CD8-positive, alpha-beta T cell (primary cell): ENCODE measurements at regions of chr9 and their contacts with region 1.

Region 1: DNA sequence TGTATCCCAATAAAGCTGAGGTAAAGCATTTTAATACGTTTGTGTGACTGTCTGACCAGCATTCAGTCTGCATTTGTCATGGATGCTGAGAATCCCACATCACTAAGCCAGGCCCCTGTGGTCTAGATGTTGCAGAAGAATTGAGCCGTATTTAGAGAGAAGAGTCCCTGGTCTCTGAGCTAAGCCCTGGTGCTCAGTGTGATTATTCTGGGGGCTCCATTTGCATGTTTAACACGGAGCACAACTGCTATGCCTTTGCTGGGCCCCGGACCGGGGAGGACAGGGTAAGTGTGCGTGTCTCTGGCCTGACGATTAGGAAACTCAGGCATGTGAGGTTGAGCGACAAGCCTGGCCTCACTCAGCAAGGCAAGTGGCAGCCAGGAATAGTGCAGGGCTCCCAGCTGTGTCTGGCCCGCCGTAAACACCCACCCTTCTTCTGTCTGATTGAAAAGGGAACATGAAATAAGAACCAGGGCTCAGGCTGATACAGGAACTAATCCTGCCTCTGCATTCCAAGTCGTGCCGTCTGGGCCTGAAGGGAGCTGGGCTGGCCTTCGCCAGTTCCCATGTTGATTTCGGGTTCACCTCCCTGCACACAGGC is 22.3 kb downstream of the FAM78A start:
- DNase-seq: peak in 2 of 9 experiments; percentile 19 to 28
- ATAC-seq: no peak
- H3K4me3 ChIP-seq: no peak overlapping the region
- H3K4me3 Mint-ChIP-seq: peak overlapping the region; percentile 29
- H3K27ac ChIP-seq: no peak overlapping the region
- H3K27ac Mint-ChIP-seq: peak overlapping the region; percentile 75
- H3K4me1 ChIP-seq: peaks cover 76% of the 10 kb centered on the region
- H3K4me1 Mint-ChIP-seq: peaks cover 62% of the 10 kb centered on the region
- H3K27me3 ChIP-seq: no peaks in the 10 kb centered on the region
- H3K27me3 Mint-ChIP-seq: no peaks in the 10 kb centered on the region
- CTCF ChIP-seq: no peak

Region 2: DNA sequence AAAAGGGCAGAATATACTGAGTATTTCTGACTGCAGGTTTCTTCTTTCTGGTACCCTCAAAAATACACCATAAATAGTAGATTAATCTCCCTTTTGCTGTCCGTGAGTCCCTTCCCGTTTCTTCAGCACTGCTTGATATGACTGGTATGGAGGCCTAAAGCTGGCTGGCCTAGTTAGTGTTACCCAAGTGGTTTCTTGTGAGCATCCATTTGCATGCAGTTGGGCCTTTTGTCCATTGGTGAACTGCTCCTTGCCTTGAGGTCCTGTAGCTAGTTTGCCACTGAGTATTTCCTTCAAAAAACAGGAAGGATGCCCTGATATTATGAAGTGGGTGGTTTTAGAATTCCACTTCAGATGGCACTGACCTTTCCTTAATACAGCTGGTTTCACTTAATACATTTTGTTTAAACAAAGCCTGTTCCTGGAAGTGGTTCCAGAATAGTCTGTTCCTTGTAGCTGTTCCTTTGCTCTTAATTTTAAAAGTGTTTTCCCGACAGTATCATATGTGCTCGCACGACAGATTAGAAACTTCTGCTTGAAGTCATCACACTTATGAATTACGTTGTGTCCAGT is 459.0 kb before region 1 on chr9:
- CTCF ChIA-PET with region 1: no interaction called
- POLR2A ChIA-PET with region 1: no interaction called
- intact Hi-C with region 1: no loop called
- DNase-seq: no peak
- ATAC-seq: no peak
- H3K4me3 ChIP-seq: no peak overlapping the region
- H3K4me3 Mint-ChIP-seq: no peak overlapping the region
- H3K27ac ChIP-seq: no peak overlapping the region
- H3K27ac Mint-ChIP-seq: no peak overlapping the region
- H3K4me1 ChIP-seq: no peaks in the 10 kb centered on the region
- H3K4me1 Mint-ChIP-seq: peaks cover 2% of the 10 kb centered on the region
- H3K27me3 ChIP-seq: no peaks in the 10 kb centered on the region
- H3K27me3 Mint-ChIP-seq: no peaks in the 10 kb centered on the region
- CTCF ChIP-seq: no peak

Region 3: GRCh38 chr9:131178382-131178781 is 75.6 kb before region 1 on chr9:
- CTCF ChIA-PET with region 1: interaction called, 11 read pairs
- POLR2A ChIA-PET with region 1: interaction called, 6 read pairs
- intact Hi-C with region 1: no loop called
- DNase-seq: peak; percentile 65 to 86 (median 77)
- ATAC-seq: peak; percentile 100
- H3K4me3 ChIP-seq: no peak overlapping the region
- H3K4me3 Mint-ChIP-seq: no peak overlapping the region
- H3K27ac ChIP-seq: no peak overlapping the region
- H3K27ac Mint-ChIP-seq: no peak overlapping the region
- H3K4me1 ChIP-seq: no peaks in the 10 kb centered on the region
- H3K4me1 Mint-ChIP-seq: peaks cover 12% of the 10 kb centered on the region
- H3K27me3 ChIP-seq: no peaks in the 10 kb centered on the region
- H3K27me3 Mint-ChIP-seq: no peaks in the 10 kb centered on the region
- CTCF ChIP-seq: peak; percentile 99

Region 4: GRCh38 chr9:131237931-131238401 is 16.0 kb before region 1 on chr9:
- CTCF ChIA-PET with region 1: interaction called, 3 read pairs
- POLR2A ChIA-PET with region 1: interaction called, 49 read pairs
- intact Hi-C with region 1: loop called (anchors 1 kb)
- DNase-seq: peak; percentile 71 to 94 (median 88)
- ATAC-seq: peak; percentile 92
- H3K4me3 ChIP-seq: peak overlapping the region; percentile 15 to 50
- H3K4me3 Mint-ChIP-seq: peak overlapping the region; percentile 83
- H3K27ac ChIP-seq: peak overlapping the region; percentile 54 to 73
- H3K27ac Mint-ChIP-seq: peak overlapping the region; percentile 98
- H3K4me1 ChIP-seq: peaks cover 41% of the 10 kb centered on the region
- H3K4me1 Mint-ChIP-seq: peaks cover 42% of the 10 kb centered on the region
- H3K27me3 ChIP-seq: no peaks in the 10 kb centered on the region
- H3K27me3 Mint-ChIP-seq: no peaks in the 10 kb centered on the region
- CTCF ChIP-seq: no peak

Region 5: GRCh38 chr9:131270171-131271015 is 16.4 kb after region 1 on chr9:
- CTCF ChIA-PET with region 1: interaction called, 40 read pairs
- POLR2A ChIA-PET with region 1: interaction called, 490 read pairs
- intact Hi-C with region 1: loop called (anchors 1 kb)
- DNase-seq: peak in 6 of 9 experiments; percentile 38 to 82 (median 62)
- ATAC-seq: peak; percentile 7
- H3K4me3 ChIP-seq: peak overlapping the region; percentile 90 to 95
- H3K4me3 Mint-ChIP-seq: peak overlapping the region; percentile 98
- H3K27ac ChIP-seq: peak overlapping the region; percentile 84 to 93
- H3K27ac Mint-ChIP-seq: peak overlapping the region; percentile 94
- H3K4me1 ChIP-seq: peaks cover 60% of the 10 kb centered on the region
- H3K4me1 Mint-ChIP-seq: peaks cover 70% of the 10 kb centered on the region
- H3K27me3 ChIP-seq: no peaks in the 10 kb centered on the region
- H3K27me3 Mint-ChIP-seq: no peaks in the 10 kb centered on the region
- CTCF ChIP-seq: no peak

Region 6: GRCh38 chr9:131277910-131278701 is 24.1 kb after region 1 on chr9:
- CTCF ChIA-PET with region 1: interaction called, 40 read pairs
- POLR2A ChIA-PET with region 1: interaction called, 490 read pairs
- intact Hi-C with region 1: loop called (anchors 1 kb)
- DNase-seq: peak; percentile 43 to 89 (median 72)
- ATAC-seq: peak; percentile 51
- H3K4me3 ChIP-seq: peak overlapping the region; percentile 45 to 49
- H3K4me3 Mint-ChIP-seq: peak overlapping the region; percentile 90
- H3K27ac ChIP-seq: peak overlapping the region; percentile 48 to 84
- H3K27ac Mint-ChIP-seq: peak overlapping the region; percentile 90
- H3K4me1 ChIP-seq: peaks cover 26% of the 10 kb centered on the region
- H3K4me1 Mint-ChIP-seq: peaks cover 30% of the 10 kb centered on the region
- H3K27me3 ChIP-seq: peaks cover 0 to 3% of the 10 kb centered on the region in 2 experiments
- H3K27me3 Mint-ChIP-seq: no peaks in the 10 kb centered on the region
- CTCF ChIP-seq: no peak

Region 7: DNA sequence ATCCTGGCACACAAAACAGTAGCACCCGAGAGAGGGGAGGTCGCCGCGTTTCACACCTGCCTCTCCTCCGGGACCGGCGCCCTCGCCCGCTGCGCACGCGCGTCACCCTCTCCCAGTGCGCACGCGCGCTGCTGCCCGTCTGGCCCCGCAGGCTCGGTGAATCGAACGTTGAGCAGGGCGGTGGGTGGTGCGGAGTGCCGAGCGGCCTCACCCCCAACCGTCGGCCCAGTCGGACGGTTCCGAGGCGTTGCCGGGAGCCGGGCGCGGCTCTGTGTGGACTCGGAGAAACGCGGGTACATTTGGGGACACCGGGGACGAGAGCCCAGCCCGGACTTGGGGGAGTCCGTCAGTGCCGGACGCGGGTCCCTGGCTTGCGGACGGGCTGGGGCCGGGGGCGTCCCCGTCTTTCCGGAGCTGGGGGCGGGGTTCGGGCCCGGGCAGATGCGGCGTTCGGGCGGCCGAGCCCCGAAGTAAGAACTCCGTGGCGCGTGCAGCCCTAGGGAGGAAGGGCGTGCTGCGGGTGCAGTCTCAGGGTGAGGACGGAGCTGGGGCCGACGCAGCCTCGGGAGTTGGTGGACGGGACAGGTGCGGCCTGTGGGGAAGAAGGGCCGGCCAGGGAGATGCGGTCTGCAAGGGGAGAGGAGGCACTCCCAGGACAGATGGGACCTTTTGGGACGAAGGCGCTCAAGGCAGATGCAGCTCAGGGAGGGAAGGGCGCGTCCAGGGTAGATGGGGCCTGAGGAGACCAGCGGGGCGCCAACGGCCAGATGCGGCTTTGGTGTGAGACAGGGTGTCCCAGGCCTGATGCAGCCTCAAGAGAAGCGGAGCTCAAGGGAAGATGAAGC is 249.0 kb after region 1 on chr9 and contains the start of gene POMT1:
- CTCF ChIA-PET with region 1: no interaction called
- POLR2A ChIA-PET with region 1: interaction called, 3 read pairs
- intact Hi-C with region 1: loop called in 1 of 2 experiments (anchors 5 kb)
- DNase-seq: peak; percentile 76 to 95 (median 87)
- ATAC-seq: peak; percentile 56
- H3K4me3 ChIP-seq: peak within 1 kb of the TSS; percentile 79 to 83
- H3K4me3 Mint-ChIP-seq: peak within 1 kb of the TSS; percentile 94
- H3K27ac ChIP-seq: peak within 1 kb of the TSS; percentile 45 to 50
- H3K27ac Mint-ChIP-seq: peak within 1 kb of the TSS; percentile 93
- H3K4me1 ChIP-seq: peaks cover 43% of the 10 kb centered on the region
- H3K4me1 Mint-ChIP-seq: peaks cover 62% of the 10 kb centered on the region
- H3K27me3 ChIP-seq: no peaks in the 10 kb centered on the region
- H3K27me3 Mint-ChIP-seq: no peaks in the 10 kb centered on the region
- CTCF ChIP-seq: no peak
- total RNA-seq, gene POMT1: 33.9 to 40.8 TPM

Region 8: DNA sequence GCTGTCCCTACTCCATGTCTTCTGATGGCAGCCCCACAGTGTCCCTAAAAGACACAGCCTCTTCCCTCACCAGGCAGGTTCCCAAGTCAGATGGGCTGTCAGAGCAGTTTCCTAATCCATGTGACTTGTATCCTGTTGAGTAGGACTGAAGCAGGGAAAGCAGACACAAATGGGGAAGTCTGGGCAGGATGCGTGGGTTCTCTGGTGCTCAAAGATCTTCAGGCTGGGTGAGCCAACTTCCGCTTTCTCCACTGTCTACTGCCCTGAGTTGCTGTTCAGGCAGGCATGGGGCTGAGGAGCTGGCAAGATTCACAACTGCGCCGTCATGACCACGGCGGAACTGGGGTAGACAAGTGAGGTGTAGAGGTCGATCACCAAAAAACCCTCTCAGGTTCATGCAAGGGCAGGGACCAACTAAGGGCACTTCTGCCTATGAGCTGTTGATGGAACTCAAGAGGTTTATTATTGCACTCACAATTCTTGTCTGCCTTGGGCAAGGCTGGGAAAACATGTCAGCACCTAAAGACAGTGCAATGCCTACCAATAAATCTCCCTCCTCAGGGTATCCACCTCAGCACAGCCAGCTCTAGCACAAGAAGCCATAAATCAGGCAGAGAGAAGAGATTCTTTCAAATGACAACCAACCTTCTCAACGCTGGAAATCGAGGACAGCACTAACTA is 402.5 kb after region 1 on chr9:
- CTCF ChIA-PET with region 1: no interaction called
- POLR2A ChIA-PET with region 1: no interaction called
- intact Hi-C with region 1: no loop called
- DNase-seq: peak; percentile 53 to 90 (median 71)
- ATAC-seq: peak; percentile 84
- H3K4me3 ChIP-seq: no peak overlapping the region
- H3K4me3 Mint-ChIP-seq: peak overlapping the region; percentile 46
- H3K27ac ChIP-seq: peak overlapping the region; percentile 16 to 73
- H3K27ac Mint-ChIP-seq: peak overlapping the region; percentile 96
- H3K4me1 ChIP-seq: peaks cover 33% of the 10 kb centered on the region
- H3K4me1 Mint-ChIP-seq: peaks cover 70% of the 10 kb centered on the region
- H3K27me3 ChIP-seq: no peaks in the 10 kb centered on the region
- H3K27me3 Mint-ChIP-seq: no peaks in the 10 kb centered on the region
- CTCF ChIP-seq: no peak

Region 9: GRCh38 chr9:132354637-132355355 is 1100.8 kb after region 1 on chr9 and contains the start of gene SETX:
- CTCF ChIA-PET with region 1: no interaction called
- POLR2A ChIA-PET with region 1: no interaction called
- intact Hi-C with region 1: loop called in 1 of 2 experiments (anchors 10 kb)
- DNase-seq: peak; percentile 92 to 99 (median 97)
- ATAC-seq: peak; percentile 83
- H3K4me3 ChIP-seq: peak within 1 kb of the TSS; percentile 77 to 86
- H3K4me3 Mint-ChIP-seq: peak within 1 kb of the TSS; percentile 87
- H3K27ac ChIP-seq: peak within 1 kb of the TSS; percentile 94 to 97
- H3K27ac Mint-ChIP-seq: peak within 1 kb of the TSS; percentile 98
- H3K4me1 ChIP-seq: peaks cover 40% of the 10 kb centered on the region
- H3K4me1 Mint-ChIP-seq: peaks cover 44% of the 10 kb centered on the region
- H3K27me3 ChIP-seq: no peaks in the 10 kb centered on the region
- H3K27me3 Mint-ChIP-seq: no peaks in the 10 kb centered on the region
- CTCF ChIP-seq: no peak
- total RNA-seq, gene SETX: 37.5 to 40.7 TPM